Activated T-helper 2 cell treated with anti-CD3 and anti-CD28 coated beads, Interferon-gamma antibody, Interleukin-2, Interleukin-4, amounts not matched to agents 10 μg/mL and 5 μg/mL and 100 μg/mL, durations not matched to agents 14 hours and 24 hours and 36 hours (primary cell): ENCODE measurements at regions of chr9 and their contacts with region 1.

Region 1: DNA sequence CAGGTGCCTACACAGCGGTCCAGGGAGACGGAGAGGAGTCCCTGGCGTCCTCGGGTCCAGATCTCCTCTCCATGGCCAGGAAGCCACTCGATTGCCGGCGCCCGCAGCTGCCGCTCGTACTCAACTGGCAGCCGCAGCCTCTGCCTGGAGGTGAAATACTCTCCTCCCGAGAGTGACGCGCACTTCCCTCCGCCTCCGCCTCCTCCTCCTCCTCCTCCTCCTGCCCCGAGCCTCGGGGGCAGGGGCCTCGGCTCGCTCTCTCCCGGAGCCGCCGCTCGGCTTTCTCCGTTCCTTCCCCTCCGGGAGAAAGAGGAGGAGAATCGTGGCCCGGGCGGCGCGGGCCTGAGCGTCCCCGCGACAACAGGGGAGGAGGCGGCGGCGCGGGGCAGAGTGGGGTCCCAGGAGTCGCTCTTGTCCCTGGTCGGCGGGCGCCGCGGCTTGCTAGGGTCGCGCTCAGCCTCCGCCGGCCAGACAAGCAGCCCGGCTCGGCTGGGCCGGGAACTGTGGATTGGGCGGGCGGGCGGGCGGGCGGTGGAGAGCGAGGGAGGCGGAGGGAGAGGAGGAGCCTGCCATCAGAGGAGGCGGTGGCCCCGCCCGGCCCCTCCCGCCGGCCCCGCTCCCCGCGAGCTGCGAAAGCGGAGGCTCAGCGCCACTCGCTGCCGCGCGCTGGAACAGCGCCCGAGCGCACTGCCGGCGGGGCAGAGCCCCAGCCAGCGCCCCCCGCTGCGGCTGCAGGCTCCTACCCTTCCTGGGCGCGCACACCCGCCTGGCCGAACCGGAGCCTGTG is at the start of gene CEMIP2:
- DNase-seq: peak; percentile 86
- H3K4me3 Mint-ChIP-seq: peak within 1 kb of the TSS; percentile 89
- H3K27ac Mint-ChIP-seq: peak within 1 kb of the TSS; percentile 88
- H3K4me1 Mint-ChIP-seq: peaks cover 44% of the 10 kb centered on the region
- H3K27me3 Mint-ChIP-seq: no peaks in the 10 kb centered on the region
- total RNA-seq, gene CEMIP2: 44.8 and 45.3 TPM in 2 replicates

Region 2: DNA sequence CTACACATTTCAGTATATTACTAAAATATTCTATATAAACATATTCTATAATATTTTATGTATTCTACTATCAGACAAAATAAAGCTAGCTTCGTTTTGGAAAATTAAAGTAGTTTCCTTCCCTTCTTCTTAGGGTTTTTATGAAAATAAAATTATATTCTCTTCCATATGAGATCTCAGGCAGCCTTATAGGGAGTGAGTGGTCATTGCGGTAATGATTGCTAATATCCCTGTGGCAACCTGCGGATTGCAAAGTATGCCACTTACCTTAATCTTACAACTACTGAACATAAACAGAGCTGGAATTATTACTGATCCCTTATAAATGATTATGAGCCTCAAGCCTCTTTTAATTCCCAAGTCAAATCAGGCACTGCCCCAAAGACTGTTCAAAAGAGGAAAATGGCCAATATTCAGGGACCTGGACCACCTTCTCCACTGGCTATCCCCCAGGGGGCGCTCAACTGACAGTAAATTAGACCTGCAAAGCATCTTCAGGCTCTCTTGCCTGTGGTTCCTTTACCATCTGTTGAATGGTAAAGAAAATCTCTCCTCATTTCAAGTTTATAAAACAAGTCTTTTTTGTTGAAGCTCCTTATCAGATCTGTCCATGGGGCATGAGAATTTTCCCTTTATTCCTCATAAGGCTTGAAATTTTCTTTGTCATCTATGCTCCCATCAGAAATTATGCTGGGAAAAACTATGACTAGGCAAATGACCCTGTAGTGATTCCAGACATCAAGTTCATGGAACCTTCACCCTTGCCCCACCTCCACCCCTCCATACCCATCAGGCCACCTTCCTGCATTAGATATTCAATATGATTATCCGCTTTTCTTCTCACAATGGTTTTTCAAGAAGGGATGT is 164.2 kb before region 1 on chr9:
- intact Hi-C with region 1: loop called (anchors 1 kb)
- DNase-seq: peak; percentile 57
- H3K4me3 Mint-ChIP-seq: no peak overlapping the region
- H3K27ac Mint-ChIP-seq: no peak overlapping the region
- H3K4me1 Mint-ChIP-seq: no peaks in the 10 kb centered on the region
- H3K27me3 Mint-ChIP-seq: peaks cover 4% of the 10 kb centered on the region

Region 3: GRCh38 chr9:71624728-71625127 is 143.9 kb before region 1 on chr9:
- intact Hi-C with region 1: no loop called
- DNase-seq: no peak
- H3K4me3 Mint-ChIP-seq: no peak overlapping the region
- H3K27ac Mint-ChIP-seq: no peak overlapping the region
- H3K4me1 Mint-ChIP-seq: no peaks in the 10 kb centered on the region
- H3K27me3 Mint-ChIP-seq: peaks cover 14% of the 10 kb centered on the region

Region 4: GRCh38 chr9:71721855-71722254 is 46.7 kb before region 1 on chr9:
- intact Hi-C with region 1: loop called (anchors 5 kb)
- DNase-seq: no peak
- H3K4me3 Mint-ChIP-seq: no peak overlapping the region
- H3K27ac Mint-ChIP-seq: no peak overlapping the region
- H3K4me1 Mint-ChIP-seq: peaks cover 5% of the 10 kb centered on the region
- H3K27me3 Mint-ChIP-seq: no peaks in the 10 kb centered on the region

Region 5: GRCh38 chr9:71741711-71742648 is 26.6 kb before region 1 on chr9:
- intact Hi-C with region 1: no loop called
- DNase-seq: no peak
- H3K4me3 Mint-ChIP-seq: no peak overlapping the region
- H3K27ac Mint-ChIP-seq: no peak overlapping the region
- H3K4me1 Mint-ChIP-seq: peaks cover 13% of the 10 kb centered on the region
- H3K27me3 Mint-ChIP-seq: no peaks in the 10 kb centered on the region

Region 6: DNA sequence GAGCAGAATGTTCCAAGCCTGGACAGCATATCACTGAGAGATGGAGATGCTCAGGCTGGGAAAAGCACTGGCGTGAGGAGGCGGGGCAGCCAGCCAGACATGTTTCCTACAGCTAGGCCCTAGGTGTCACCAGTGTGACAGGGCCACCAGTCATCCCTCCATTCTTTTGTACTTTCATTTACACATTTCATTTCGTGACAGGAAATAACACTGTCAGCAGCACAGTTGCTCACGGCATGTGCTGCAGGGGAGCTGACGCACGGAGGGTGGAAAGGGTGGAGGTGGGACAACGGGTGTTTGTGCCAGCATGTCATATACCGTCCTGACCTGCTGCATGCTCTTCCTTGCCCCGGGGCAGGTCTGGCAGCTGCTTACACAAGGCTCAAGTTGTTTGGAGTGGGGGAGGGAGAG is 14.5 kb after region 1 on chr9:
- intact Hi-C with region 1: loop called (anchors 1 kb)
- DNase-seq: peak; percentile 81
- H3K4me3 Mint-ChIP-seq: peak overlapping the region; percentile 70
- H3K27ac Mint-ChIP-seq: peak overlapping the region; percentile 99
- H3K4me1 Mint-ChIP-seq: peaks cover 48% of the 10 kb centered on the region
- H3K27me3 Mint-ChIP-seq: no peaks in the 10 kb centered on the region

Region 7: GRCh38 chr9:71806901-71807307 is 38.3 kb after region 1 on chr9:
- intact Hi-C with region 1: loop called (anchors 5 kb)
- DNase-seq: peak; percentile 45
- H3K4me3 Mint-ChIP-seq: no peak overlapping the region
- H3K27ac Mint-ChIP-seq: no peak overlapping the region
- H3K4me1 Mint-ChIP-seq: peaks cover 8% of the 10 kb centered on the region
- H3K27me3 Mint-ChIP-seq: peaks cover 9% of the 10 kb centered on the region

Region 8: DNA sequence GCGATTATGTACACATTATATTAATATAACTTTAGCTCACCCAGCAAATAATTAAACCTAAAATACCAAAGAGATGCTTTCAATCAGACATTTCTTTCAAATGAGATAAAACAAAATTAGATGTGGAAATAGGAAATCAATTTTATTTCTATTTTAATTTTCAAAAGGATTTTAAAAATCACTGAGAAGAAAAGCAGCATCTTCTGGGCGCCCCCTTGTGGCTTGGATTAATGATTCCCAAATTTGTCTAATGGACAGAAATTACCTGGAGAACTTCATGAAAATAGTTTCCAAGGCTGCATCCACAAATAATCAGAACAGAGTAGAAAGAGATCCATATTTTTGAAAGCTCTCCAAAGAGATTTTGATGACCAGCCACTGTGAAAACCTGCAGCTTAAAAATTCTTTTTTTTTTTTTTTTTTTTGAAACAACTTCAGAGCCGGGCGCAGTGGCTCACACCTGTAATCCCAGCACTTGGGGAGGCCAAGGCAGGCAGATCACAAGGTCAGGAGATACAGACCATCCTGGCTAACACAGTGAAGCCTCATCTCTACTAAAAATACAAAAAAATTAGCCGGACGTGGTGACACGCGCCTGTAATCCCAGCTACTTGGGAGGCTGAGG is 50.6 kb after region 1 on chr9:
- intact Hi-C with region 1: no loop called
- DNase-seq: no peak
- H3K4me3 Mint-ChIP-seq: no peak overlapping the region
- H3K27ac Mint-ChIP-seq: no peak overlapping the region
- H3K4me1 Mint-ChIP-seq: peaks cover 29% of the 10 kb centered on the region
- H3K27me3 Mint-ChIP-seq: peaks cover 7% of the 10 kb centered on the region